T-cell (primary cell): ENCODE measurements at regions of chr7 and their contacts with region 1.

Region 1: DNA sequence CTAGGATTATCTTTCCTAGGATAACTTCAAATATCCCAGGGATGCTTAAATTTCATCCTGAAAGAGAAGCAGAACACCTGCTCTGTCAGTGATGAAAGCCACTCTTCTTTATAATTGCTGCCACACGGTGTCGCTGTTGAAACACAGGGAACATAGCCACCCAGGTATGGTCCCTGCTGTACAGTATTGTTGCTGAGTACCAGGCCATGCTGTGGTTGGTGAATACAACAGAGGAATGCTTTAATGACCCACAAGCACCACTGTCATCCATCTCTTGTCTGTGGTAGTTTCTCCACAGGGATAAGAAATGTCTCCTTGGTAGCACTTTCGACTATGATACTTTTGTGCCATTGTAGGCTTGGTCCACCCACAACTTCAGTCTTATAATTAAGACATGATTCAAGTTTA is 70.6 kb upstream of the STARD3NL start:
- DNase-seq: peak; percentile 21 to 80 (median 55)
- ATAC-seq: peak; percentile 71 to 80 (median 78)
- H3K4me3 ChIP-seq: no peak overlapping the region
- H3K4me3 Mint-ChIP-seq: no peak overlapping the region
- H3K27ac ChIP-seq: no peak overlapping the region
- H3K27ac Mint-ChIP-seq: no peak overlapping the region
- H3K4me1 ChIP-seq: no peaks in the 10 kb centered on the region
- H3K4me1 Mint-ChIP-seq: peaks cover 0 to 2% (median 0%) of the 10 kb centered on the region in 3 donors
- H3K27me3 ChIP-seq: peaks cover 0 to 4% of the 10 kb centered on the region in 2 experiments
- H3K27me3 Mint-ChIP-seq: peaks cover 6 to 8% of the 10 kb centered on the region in 2 donors

Region 2: GRCh38 chr7:37488163-37488764 is 619.2 kb before region 1 on chr7:
- CTCF ChIA-PET with region 1: no interaction called
- POLR2A ChIA-PET with region 1: no interaction called
- DNase-seq: no peak
- ATAC-seq: no peak
- H3K4me3 ChIP-seq: no peak overlapping the region
- H3K4me3 Mint-ChIP-seq: no peak overlapping the region
- H3K27ac ChIP-seq: no peak overlapping the region
- H3K27ac Mint-ChIP-seq: no peak overlapping the region
- H3K4me1 ChIP-seq: no peaks in the 10 kb centered on the region
- H3K4me1 Mint-ChIP-seq: no peaks in the 10 kb centered on the region
- H3K27me3 ChIP-seq: peaks cover 0 to 4% of the 10 kb centered on the region in 2 experiments
- H3K27me3 Mint-ChIP-seq: peaks cover 3 to 7% of the 10 kb centered on the region in 2 donors

Region 3: GRCh38 chr7:37683246-37684120 is 424.0 kb before region 1 on chr7 and contains the start of gene GPR141:
- CTCF ChIA-PET with region 1: no interaction called
- POLR2A ChIA-PET with region 1: no interaction called
- DNase-seq: no peak
- ATAC-seq: no peak
- H3K4me3 ChIP-seq: no peak within 1 kb of the TSS
- H3K4me3 Mint-ChIP-seq: peak within 1 kb of the TSS in 1 of 3 donors; percentile 50
- H3K27ac ChIP-seq: no peak within 1 kb of the TSS
- H3K27ac Mint-ChIP-seq: peak within 1 kb of the TSS in 1 of 2 donors; percentile 23
- H3K4me1 ChIP-seq: peaks cover 0 to 2% of the 10 kb centered on the region in 2 experiments
- H3K4me1 Mint-ChIP-seq: peaks cover 0 to 6% (median 4%) of the 10 kb centered on the region in 3 donors
- H3K27me3 ChIP-seq: no peaks in the 10 kb centered on the region
- H3K27me3 Mint-ChIP-seq: peaks cover 10 to 14% of the 10 kb centered on the region in 2 donors
- total RNA-seq, gene GPR141: 0.25 to 6.3 (median 0.92) TPM

Region 4: GRCh38 chr7:38179776-38180226 is 72.3 kb after region 1 on chr7:
- CTCF ChIA-PET with region 1: interaction called, 4 to 11 read pairs
- POLR2A ChIA-PET with region 1: no interaction called
- DNase-seq: peak in 1 of 35 experiments; percentile 7
- ATAC-seq: no peak
- H3K4me3 ChIP-seq: no peak overlapping the region
- H3K4me3 Mint-ChIP-seq: peak overlapping the region in 2 of 3 donors; percentile 96 to 97
- H3K27ac ChIP-seq: peak overlapping the region; percentile 82
- H3K27ac Mint-ChIP-seq: peak overlapping the region; percentile 40 to 71
- H3K4me1 ChIP-seq: peaks cover 7 to 21% of the 10 kb centered on the region in 2 experiments
- H3K4me1 Mint-ChIP-seq: peaks cover 31 to 41% (median 40%) of the 10 kb centered on the region in 3 donors
- H3K27me3 ChIP-seq: peaks cover 0 to 6% of the 10 kb centered on the region in 2 experiments
- H3K27me3 Mint-ChIP-seq: peaks cover under 1% of the 10 kb centered on the region in 2 donors

Region 5: DNA sequence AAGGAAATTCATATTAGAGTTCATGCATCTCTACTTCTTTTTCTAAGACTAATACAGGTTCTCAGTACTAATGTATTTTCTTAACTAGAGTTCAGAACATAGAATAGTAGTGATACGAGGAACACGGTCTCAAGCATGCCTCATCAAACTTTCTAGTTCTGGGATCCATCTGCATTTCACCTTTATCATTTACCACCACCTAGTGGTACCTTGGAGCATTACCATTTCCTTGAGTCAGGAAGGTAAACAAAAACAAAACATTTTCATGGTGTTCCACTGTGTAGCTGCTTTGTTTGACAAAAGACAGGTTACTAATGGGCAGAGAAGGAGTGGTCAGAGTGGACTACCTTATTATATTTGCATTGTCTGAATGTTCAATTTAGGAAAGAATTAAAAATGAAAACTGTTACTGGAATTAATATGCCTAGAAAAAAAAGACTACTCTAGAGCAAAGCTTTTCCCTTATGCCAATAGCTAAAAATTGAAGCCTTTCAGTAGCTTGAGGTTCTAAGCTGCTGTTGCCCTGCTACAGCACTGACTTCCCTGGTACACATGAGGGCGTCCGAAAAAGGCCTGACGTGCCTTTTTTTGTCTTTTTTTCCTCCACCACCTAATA is 115.1 kb after region 1 on chr7:
- CTCF ChIA-PET with region 1: interaction called, 25 to 41 read pairs
- POLR2A ChIA-PET with region 1: no interaction called
- DNase-seq: peak in 10 of 35 experiments; percentile 10 to 85 (median 22)
- ATAC-seq: peak; percentile 64 to 78 (median 74)
- H3K4me3 ChIP-seq: no peak overlapping the region
- H3K4me3 Mint-ChIP-seq: no peak overlapping the region
- H3K27ac ChIP-seq: peak overlapping the region; percentile 68
- H3K27ac Mint-ChIP-seq: peak overlapping the region; percentile 84 to 90
- H3K4me1 ChIP-seq: peaks cover 0 to 42% of the 10 kb centered on the region in 2 experiments
- H3K4me1 Mint-ChIP-seq: peaks cover 10 to 61% (median 54%) of the 10 kb centered on the region in 3 donors
- H3K27me3 ChIP-seq: no peaks in the 10 kb centered on the region
- H3K27me3 Mint-ChIP-seq: no peaks in the 10 kb centered on the region